ENCODE measurements at regions of chr11 and their contacts with region 1.

Region 1: DNA sequence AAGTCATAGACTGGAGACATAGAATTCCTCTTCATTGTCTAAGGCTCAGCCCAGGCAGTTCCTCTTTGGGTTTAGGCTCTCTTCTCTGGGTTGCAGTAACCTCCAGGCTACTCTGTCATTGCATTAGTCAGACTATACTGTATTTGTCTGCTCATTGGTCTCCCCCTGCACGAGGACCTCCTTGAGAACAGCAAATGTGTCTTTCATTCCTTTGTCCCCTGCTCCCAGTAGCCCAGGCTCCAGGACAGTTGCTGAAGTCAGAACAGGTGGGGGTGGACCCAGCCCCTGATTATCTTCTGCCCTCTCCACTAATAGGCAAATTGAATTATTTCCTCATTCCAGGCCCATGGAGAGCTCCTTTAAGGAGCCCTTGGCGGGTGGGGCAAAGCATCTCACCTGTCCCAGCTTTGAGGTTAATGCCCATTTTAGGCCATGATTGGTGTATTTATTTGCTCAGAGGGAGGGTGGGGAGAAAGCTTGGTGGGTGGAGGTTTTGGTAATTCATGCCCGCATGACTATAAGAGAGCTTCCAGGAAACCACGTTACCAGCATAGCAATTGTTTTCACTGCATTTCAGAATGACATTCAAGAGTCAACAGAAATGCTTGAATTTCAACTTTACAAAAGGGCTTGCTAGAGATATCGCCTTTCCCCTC is 40.9 kb downstream of the NAV2 start:
- DNase-seq: no peak
- ATAC-seq: no peak
- H3K4me3 ChIP-seq: no peak overlapping the region
- H3K27ac ChIP-seq: no peak overlapping the region
- H3K4me1 ChIP-seq: no peaks in the 10 kb centered on the region
- H3K27me3 ChIP-seq: no peaks in the 10 kb centered on the region; a peak in 1 of 4 replicates
- CTCF ChIP-seq: no peak
- EP300 ChIP-seq: no peak
- POLR2A ChIP-seq: no peak
- RAD21 ChIP-seq: no peak

Region 2: GRCh38 chr11:19561011-19561410 is 192.6 kb before region 1 on chr11:
- CTCF ChIA-PET with region 1: interaction called, 10 read pairs
- POLR2A ChIA-PET with region 1: no interaction called
- RAD21 ChIA-PET with region 1: interaction called, 5 read pairs
- SMC1A ChIA-PET with region 1: interaction called, 4 read pairs
- in situ Hi-C with region 1: no loop called
- intact Hi-C with region 1: no loop called
- DNase-seq: no peak
- ATAC-seq: no peak
- H3K4me3 ChIP-seq: no peak overlapping the region
- H3K27ac ChIP-seq: no peak overlapping the region
- H3K4me1 ChIP-seq: no peaks in the 10 kb centered on the region
- H3K27me3 ChIP-seq: no peaks in the 10 kb centered on the region; a peak in 1 of 4 replicates
- CTCF ChIP-seq: no peak
- EP300 ChIP-seq: no peak
- POLR2A ChIP-seq: no peak
- RAD21 ChIP-seq: no peak

Region 3: GRCh38 chr11:19594326-19594725 is 159.3 kb before region 1 on chr11:
- CTCF ChIA-PET with region 1: no interaction called
- POLR2A ChIA-PET with region 1: no interaction called
- RAD21 ChIA-PET with region 1: no interaction called
- SMC1A ChIA-PET with region 1: no interaction called
- in situ Hi-C with region 1: no loop called
- intact Hi-C with region 1: no loop called
- DNase-seq: no peak
- ATAC-seq: no peak
- H3K4me3 ChIP-seq: no peak overlapping the region
- H3K27ac ChIP-seq: no peak overlapping the region
- H3K4me1 ChIP-seq: no peaks in the 10 kb centered on the region
- H3K27me3 ChIP-seq: peaks cover 0 to 3% of the 10 kb centered on the region in 2 experiments; a peak in 1 of 4 replicates
- CTCF ChIP-seq: no peak
- EP300 ChIP-seq: no peak
- POLR2A ChIP-seq: no peak
- RAD21 ChIP-seq: no peak

Measured in GM12878 (cell line).